ENCODE measurements at regions of chr12 and their contacts with region 1.

Region 1: GRCh38 chr12:123757561-123757960 is 4.5 kb upstream of the DNAH10 start:
- DNase-seq: no peak
- H3K4me3 ChIP-seq: no peak overlapping the region
- H3K27ac ChIP-seq: no peak overlapping the region
- H3K4me1 ChIP-seq: peaks cover 8% of the 10 kb centered on the region
- H3K27me3 ChIP-seq: peaks cover 2% of the 10 kb centered on the region
- CTCF ChIP-seq: no peak

Region 2: DNA sequence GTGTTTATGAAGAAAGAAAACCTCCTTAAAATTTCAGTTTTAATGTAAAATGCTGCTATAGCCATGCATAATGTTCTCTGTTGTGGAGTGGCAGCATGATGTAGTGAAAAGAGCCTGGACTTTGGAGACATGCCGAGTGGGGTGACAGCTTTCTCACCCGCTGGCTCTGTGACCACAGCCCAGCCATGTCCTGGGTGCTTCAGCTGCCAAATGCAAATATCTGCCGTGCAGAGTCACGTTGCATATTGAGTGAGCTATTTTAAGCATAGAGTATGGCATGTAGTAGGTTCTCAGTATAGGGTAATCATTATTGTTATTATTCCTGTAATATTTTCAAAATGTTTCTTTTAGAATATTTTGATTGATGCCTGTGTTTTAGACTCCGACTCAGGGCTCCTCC is 102.1 kb before region 1 on chr12:
- CTCF ChIA-PET with region 1: no interaction called
- dilution Hi-C with region 1: no loop called
- in situ Hi-C with region 1: no loop called
- intact Hi-C with region 1: no loop called
- DNase-seq: no peak
- H3K4me3 ChIP-seq: no peak overlapping the region
- H3K27ac ChIP-seq: no peak overlapping the region
- H3K4me1 ChIP-seq: peaks cover 12% of the 10 kb centered on the region
- H3K27me3 ChIP-seq: no peaks in the 10 kb centered on the region
- CTCF ChIP-seq: no peak

Region 3: GRCh38 chr12:123670882-123671728 is 86.5 kb before region 1 on chr12 and contains the start of gene TCTN2:
- CTCF ChIA-PET with region 1: no interaction called
- dilution Hi-C with region 1: loop called (anchors 10 kb)
- in situ Hi-C with region 1: no loop called
- intact Hi-C with region 1: no loop called
- DNase-seq: peak; percentile 85
- H3K4me3 ChIP-seq: peak within 1 kb of the TSS; percentile 64 to 82 (median 70)
- H3K27ac ChIP-seq: peak within 1 kb of the TSS; percentile 43
- H3K4me1 ChIP-seq: peaks cover 17% of the 10 kb centered on the region
- H3K27me3 ChIP-seq: no peaks in the 10 kb centered on the region
- CTCF ChIP-seq: no peak
- total RNA-seq, gene TCTN2: 8.8 to 19.2 TPM

Region 4: GRCh38 chr12:123705935-123706334 is 51.6 kb before region 1 on chr12:
- CTCF ChIA-PET with region 1: no interaction called
- dilution Hi-C with region 1: loop called (anchors 5 kb)
- in situ Hi-C with region 1: no loop called
- intact Hi-C with region 1: no loop called
- DNase-seq: no peak
- H3K4me3 ChIP-seq: no peak overlapping the region
- H3K27ac ChIP-seq: no peak overlapping the region
- H3K4me1 ChIP-seq: no peaks in the 10 kb centered on the region
- H3K27me3 ChIP-seq: no peaks in the 10 kb centered on the region
- CTCF ChIP-seq: no peak

Region 5: DNA sequence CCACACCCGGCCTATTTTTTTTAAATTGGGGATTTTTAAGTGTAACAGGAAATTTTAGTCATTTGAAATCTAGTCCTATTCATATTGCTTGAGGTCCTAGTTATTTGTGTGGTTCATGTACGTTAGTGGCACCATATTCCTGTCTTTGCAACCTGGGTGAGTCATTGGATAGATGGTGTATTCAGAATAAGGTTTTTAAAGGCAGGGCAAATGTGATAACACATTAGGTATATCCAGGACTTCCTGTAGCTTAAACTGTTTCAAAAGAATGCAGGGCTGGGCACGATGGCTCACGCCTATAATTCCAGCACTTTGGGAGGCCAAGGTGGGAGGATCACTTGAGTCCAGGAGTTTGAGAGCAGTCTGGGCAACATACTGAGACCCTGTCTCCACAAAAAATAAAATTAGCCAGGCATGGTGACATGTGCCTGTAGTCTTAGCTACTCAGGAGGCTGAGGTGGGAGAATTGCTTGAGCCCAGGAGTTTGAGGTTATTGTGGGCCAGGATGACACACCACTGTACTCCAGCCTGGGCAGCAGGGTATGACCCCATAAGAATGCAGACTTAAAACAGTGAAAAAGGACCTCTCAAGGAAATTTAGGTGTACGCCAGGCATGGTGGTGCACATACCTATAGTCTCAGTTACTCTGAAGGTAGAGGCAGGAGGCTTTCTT is 37.3 kb before region 1 on chr12:
- CTCF ChIA-PET with region 1: no interaction called
- dilution Hi-C with region 1: no loop called
- in situ Hi-C with region 1: no loop called
- intact Hi-C with region 1: no loop called
- DNase-seq: peak; percentile 16
- H3K4me3 ChIP-seq: no peak overlapping the region
- H3K27ac ChIP-seq: no peak overlapping the region
- H3K4me1 ChIP-seq: no peaks in the 10 kb centered on the region
- H3K27me3 ChIP-seq: no peaks in the 10 kb centered on the region
- CTCF ChIP-seq: no peak

Measured in mammary epithelial cell (primary cell).